IMR-90 (cell line): ENCODE measurements at regions of chr18 and their contacts with region 1.

Region 1: DNA sequence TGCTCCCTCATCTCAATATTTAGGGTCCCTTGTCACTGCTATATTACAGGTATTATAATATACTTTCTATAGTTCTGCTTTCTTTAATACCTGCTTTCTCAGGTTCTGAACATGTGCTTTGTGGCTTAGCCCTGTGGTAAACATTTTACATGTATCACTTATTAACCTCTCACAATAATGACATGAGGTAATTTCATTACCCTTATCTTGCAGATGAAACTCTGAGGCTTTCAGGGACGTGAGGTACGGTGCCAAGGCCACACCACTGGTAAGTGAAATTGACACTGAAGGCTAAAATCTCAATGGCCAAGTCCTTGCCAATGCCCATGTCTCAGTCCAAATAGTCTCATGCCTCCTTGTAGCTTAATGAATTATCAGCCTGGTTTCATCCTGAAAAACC is 21.7 kb downstream of the LINC00305 start:
- DNase-seq: no peak
- ATAC-seq: no peak
- H3K4me3 ChIP-seq: no peak overlapping the region
- H3K27ac ChIP-seq: no peak overlapping the region
- H3K4me1 ChIP-seq: no peaks in the 10 kb centered on the region
- H3K27me3 ChIP-seq: no peaks in the 10 kb centered on the region
- CTCF ChIP-seq: no peak
- POLR2A ChIP-seq: no peak
- RAD21 ChIP-seq: no peak

Region 2: DNA sequence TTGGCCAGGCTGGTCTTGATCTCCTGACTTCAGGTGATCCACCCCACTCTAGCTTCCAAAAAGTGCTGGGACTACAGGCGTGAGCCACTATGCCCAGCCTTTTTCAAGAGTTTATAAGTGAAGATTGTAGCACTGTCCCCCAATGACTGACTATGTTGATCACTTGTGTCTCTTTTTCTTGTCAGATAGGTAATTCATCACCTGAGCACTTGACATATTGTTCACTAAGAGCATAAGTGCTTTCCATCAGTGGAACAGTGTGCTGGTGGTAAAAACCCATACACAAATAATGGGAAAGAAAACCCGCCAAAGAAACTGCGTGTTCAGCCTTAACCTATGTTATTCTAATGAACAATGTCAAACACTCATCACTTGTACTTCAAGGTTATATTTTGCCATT is 1209.2 kb after region 1 on chr18:
- CTCF ChIA-PET with region 1: no interaction called
- POLR2A ChIA-PET with region 1: interaction called, 15 read pairs
- dilution Hi-C with region 1: no loop called
- in situ Hi-C with region 1: no loop called
- intact Hi-C with region 1: no loop called
- DNase-seq: no peak
- ATAC-seq: no peak
- H3K4me3 ChIP-seq: no peak overlapping the region
- H3K27ac ChIP-seq: no peak overlapping the region
- H3K4me1 ChIP-seq: no peaks in the 10 kb centered on the region
- H3K27me3 ChIP-seq: no peaks in the 10 kb centered on the region
- CTCF ChIP-seq: no peak
- POLR2A ChIP-seq: no peak
- RAD21 ChIP-seq: no peak